H1 (cell line): ENCODE measurements at regions of chr9 and their contacts with region 1.

Region 1: GRCh38 chr9:129110740-129111527 is at the starts of genes CRAT and PTPA:
- DNase-seq: peak; percentile 84 to 93
- H3K4me3 ChIP-seq: peak within 1 kb of the TSS; percentile 75 to 95 (median 89)
- H3K27ac ChIP-seq: peak within 1 kb of the TSS; percentile 95
- H3K4me1 ChIP-seq: peaks cover 0 to 5% (median 3%) of the 10 kb centered on the region in 4 experiments; a peak in 3 of 7 replicates
- H3K27me3 ChIP-seq: peaks cover 0 to 15% (median 13%) of the 10 kb centered on the region in 4 experiments; a peak in 5 of 7 replicates
- CTCF ChIP-seq: no peak
- EP300 ChIP-seq: no peak
- POLR2A ChIP-seq: peak in 1 of 2 experiments; percentile 76; a peak in 2 of 3 replicates
- RAD21 ChIP-seq: no peak
- total RNA-seq, gene CRAT: 7.2 and 8.2 TPM in 2 replicates
- total RNA-seq, gene PTPA: 145 and 156 TPM in 2 replicates

Region 2: GRCh38 chr9:129034174-129034573 is 76.8 kb before region 1 on chr9:
- CTCF ChIA-PET with region 1: no interaction called
- POLR2A ChIA-PET with region 1: no interaction called
- DNase-seq: no peak
- H3K4me3 ChIP-seq: no peak overlapping the region
- H3K27ac ChIP-seq: no peak overlapping the region
- H3K4me1 ChIP-seq: peaks cover 0 to 10% (median 5%) of the 10 kb centered on the region in 4 experiments; a peak in 5 of 7 replicates
- H3K27me3 ChIP-seq: no peaks in the 10 kb centered on the region
- CTCF ChIP-seq: no peak
- EP300 ChIP-seq: no peak
- POLR2A ChIP-seq: no peak
- RAD21 ChIP-seq: no peak

Region 3: DNA sequence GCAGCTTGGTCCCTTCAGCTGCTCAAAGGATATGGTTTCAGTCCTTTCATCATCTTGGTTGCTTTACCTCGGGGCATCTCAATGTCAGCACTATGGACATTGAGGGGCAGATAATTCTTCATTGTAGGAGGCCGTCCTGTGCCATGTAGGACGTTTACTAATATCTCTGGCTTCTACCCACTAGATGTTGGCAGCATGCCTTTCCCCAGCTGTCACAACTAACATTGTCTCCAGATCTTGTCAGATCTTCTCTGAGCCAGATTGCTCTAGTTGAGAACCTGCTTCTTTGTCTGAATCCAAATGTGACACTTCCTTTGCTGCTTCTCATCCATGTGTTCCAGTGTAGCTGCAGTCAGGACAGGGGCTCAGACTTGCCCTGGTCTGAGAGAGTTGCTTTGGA is 10.5 kb after region 1 on chr9:
- CTCF ChIA-PET with region 1: interaction called, 5 read pairs
- POLR2A ChIA-PET with region 1: interaction called, 12 read pairs
- DNase-seq: no peak
- H3K4me3 ChIP-seq: no peak overlapping the region
- H3K27ac ChIP-seq: no peak overlapping the region
- H3K4me1 ChIP-seq: peaks cover 0 to 8% (median 0%) of the 10 kb centered on the region in 4 experiments; a peak in 3 of 7 replicates
- H3K27me3 ChIP-seq: no peaks in the 10 kb centered on the region
- CTCF ChIP-seq: no peak
- EP300 ChIP-seq: no peak
- POLR2A ChIP-seq: no peak
- RAD21 ChIP-seq: no peak

Region 4: DNA sequence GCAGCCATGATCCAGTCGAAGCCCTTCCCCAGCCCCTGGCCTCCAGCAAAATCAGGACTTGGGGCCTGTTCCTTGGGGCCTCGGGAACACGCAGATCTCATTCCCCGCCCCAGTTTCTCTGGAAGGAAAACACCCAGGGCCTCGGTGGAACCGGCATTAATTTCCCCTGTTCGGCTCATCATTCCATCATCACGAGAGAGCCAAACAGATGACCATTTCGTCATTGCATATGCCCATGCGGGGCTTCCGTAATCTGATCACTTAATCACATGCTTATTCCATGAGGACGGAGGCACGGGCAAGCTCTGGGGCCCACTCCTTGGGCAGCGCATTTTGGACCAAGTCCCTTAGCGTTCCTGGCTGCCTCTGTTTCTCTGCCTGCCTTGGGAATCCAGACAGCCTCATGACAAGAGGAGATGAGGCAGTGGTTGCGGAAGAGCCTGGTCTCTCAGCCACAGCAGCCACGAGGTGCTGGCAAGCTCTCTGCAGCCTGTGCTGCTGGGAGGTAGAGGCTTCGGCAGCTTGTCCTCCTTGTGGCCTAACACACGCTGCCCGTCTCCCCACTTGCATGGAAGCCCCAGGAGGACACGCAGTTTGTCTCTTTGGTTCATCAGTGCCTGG is 132.1 kb after region 1 on chr9:
- CTCF ChIA-PET with region 1: no interaction called
- POLR2A ChIA-PET with region 1: no interaction called
- DNase-seq: no peak
- H3K4me3 ChIP-seq: no peak overlapping the region
- H3K27ac ChIP-seq: no peak overlapping the region
- H3K4me1 ChIP-seq: peaks cover 0 to 7% (median 0%) of the 10 kb centered on the region in 4 experiments; a peak in 3 of 7 replicates
- H3K27me3 ChIP-seq: peaks cover 0 to 4% (median 0%) of the 10 kb centered on the region in 4 experiments; a peak in 3 of 7 replicates
- CTCF ChIP-seq: no peak
- EP300 ChIP-seq: no peak
- POLR2A ChIP-seq: no peak
- RAD21 ChIP-seq: no peak